Esophagus squamous epithelium (tissue), 5 donors: ENCODE measurements at regions of chr3 and their contacts with region 1.

Region 1: DNA sequence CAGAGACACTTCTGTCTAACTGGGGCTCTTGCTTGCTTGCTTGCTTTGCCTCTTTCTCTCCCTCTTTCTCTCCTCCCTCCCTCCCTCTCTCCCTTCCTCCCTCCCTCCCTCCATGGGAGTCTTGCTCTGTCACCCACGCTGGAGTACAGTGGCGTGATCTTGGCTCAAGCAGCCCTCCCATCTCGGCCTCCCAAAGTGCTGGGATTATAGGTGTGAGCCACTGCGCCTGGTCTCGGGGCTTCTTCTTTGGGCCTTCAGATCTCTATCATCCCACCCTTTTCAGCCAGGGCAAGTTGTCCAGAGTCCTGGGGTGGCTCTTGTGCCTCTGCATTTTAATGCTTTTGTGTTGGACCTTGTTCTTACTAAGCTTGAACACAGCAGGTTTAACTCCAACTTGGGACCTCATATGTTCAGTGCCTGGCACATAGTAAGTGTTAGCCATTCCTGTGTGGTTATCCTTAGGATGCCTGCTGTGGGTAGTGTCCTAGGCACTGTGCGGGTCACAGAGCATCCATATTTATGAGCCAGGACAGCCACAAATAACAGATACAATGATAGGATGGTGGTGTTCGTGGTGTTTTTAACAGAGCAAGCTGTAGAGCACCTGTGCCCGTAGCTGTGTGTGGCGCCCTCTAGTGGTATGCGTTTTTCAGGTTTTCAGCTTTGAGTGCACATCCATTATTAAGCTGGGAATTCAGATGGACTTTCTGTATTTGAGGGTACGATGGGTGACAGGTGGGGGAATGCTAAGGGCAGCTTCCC is 75.1 kb downstream of the CCK start:
- DNase-seq: no peak
- H3K4me3 ChIP-seq: no peak overlapping the region
- H3K27ac ChIP-seq: peak overlapping the region in 1 of 4 donors; percentile 2
- H3K4me1 ChIP-seq: peaks cover 0 to 17% (median 0%) of the 10 kb centered on the region in 3 donors
- H3K27me3 ChIP-seq: no peaks in the 10 kb centered on the region
- CTCF ChIP-seq: peak; percentile 57 to 89 (median 84)
- POLR2A ChIP-seq: no peak

Region 2: DNA sequence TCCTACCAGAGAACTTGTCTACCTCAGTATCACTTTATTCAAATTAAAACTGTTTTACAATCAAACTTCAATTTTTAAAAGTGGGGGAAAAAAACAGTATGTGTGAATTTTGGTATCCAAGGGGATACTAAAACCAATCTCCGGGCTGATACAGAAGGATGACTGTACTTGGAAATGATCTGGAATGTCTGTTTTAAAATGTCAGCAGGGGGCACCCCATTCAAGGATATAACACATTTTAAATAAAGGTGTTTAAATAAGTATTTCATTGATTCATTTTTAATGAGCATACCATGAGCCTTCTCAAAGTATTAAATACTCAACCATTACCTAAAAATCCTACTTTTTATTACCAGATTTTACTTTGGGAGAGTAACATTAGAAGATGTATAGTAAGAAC is 296.9 kb before region 1 on chr3:
- intact Hi-C with region 1: loop called (anchors 10 kb)
- DNase-seq: no peak
- H3K4me3 ChIP-seq: no peak overlapping the region
- H3K27ac ChIP-seq: no peak overlapping the region
- H3K4me1 ChIP-seq: no peaks in the 10 kb centered on the region
- H3K27me3 ChIP-seq: no peaks in the 10 kb centered on the region
- CTCF ChIP-seq: peak in 5 of 6 experiments; percentile 34 to 72 (median 39)
- POLR2A ChIP-seq: no peak

Region 3: DNA sequence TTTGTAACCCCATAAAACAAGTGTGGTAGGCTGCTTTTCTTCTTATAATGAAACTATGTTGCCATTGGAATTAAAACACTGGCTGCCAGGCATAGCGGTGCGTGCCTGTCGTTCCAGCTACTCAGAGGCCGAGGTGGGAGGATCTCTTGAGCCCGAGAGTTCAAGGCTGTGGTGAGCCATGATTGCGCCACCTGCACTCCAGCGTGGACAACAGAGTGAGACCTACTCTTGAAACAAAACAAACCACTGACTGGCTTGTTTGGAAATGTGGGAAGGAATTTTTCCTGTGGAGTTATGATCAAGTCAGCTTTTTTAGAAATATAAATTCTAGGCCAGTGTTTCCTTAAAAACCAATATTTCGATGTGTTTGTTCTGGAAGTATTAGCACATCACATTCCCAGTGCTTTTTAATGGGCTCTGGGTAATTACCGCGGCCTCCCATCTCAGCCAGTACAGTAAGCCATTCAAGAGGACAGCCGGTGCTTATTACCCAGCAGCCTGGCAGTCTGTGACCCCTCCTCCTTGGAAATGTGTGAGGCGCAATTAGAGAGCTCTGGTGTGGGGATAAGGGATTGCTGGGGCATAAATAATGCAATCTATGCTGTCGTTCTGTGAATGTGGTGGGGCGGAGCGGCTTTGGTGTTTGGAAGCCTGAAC is 158.1 kb before region 1 on chr3:
- intact Hi-C with region 1: no loop called
- DNase-seq: no peak
- H3K4me3 ChIP-seq: no peak overlapping the region
- H3K27ac ChIP-seq: peak overlapping the region; percentile 22 to 87 (median 78)
- H3K4me1 ChIP-seq: peaks cover 15 to 65% (median 41%) of the 10 kb centered on the region in 3 donors
- H3K27me3 ChIP-seq: no peaks in the 10 kb centered on the region
- CTCF ChIP-seq: no peak
- POLR2A ChIP-seq: no peak

Region 4: GRCh38 chr3:42118762-42119361 is 72.0 kb before region 1 on chr3:
- intact Hi-C with region 1: loop called (anchors 5 kb)
- DNase-seq: no peak
- H3K4me3 ChIP-seq: no peak overlapping the region
- H3K27ac ChIP-seq: peak overlapping the region in 3 of 4 donors; percentile 32 to 68 (median 40)
- H3K4me1 ChIP-seq: peaks cover 34 to 97% (median 60%) of the 10 kb centered on the region in 3 donors
- H3K27me3 ChIP-seq: no peaks in the 10 kb centered on the region
- CTCF ChIP-seq: peak in 5 of 6 experiments; percentile 13 to 51 (median 18)
- POLR2A ChIP-seq: no peak